Caco-2 (cell line): ENCODE measurements at regions of chr18 and their contacts with region 1.

Region 1: GRCh38 chr18:3186678-3187658 is 32.8 kb downstream of the MYOM1 start:
- DNase-seq: peak; percentile 57 to 64
- H3K4me3 ChIP-seq: no peak overlapping the region
- H3K4me3 Mint-ChIP-seq: no peak overlapping the region
- H3K27ac Mint-ChIP-seq: no peak overlapping the region
- H3K4me1 ChIP-seq: no peaks in the 10 kb centered on the region
- H3K4me1 Mint-ChIP-seq: peaks cover 12% of the 10 kb centered on the region
- H3K27me3 ChIP-seq: no peaks in the 10 kb centered on the region
- H3K27me3 Mint-ChIP-seq: no peaks in the 10 kb centered on the region
- CTCF ChIP-seq: peak; percentile 35 to 50

Region 2: DNA sequence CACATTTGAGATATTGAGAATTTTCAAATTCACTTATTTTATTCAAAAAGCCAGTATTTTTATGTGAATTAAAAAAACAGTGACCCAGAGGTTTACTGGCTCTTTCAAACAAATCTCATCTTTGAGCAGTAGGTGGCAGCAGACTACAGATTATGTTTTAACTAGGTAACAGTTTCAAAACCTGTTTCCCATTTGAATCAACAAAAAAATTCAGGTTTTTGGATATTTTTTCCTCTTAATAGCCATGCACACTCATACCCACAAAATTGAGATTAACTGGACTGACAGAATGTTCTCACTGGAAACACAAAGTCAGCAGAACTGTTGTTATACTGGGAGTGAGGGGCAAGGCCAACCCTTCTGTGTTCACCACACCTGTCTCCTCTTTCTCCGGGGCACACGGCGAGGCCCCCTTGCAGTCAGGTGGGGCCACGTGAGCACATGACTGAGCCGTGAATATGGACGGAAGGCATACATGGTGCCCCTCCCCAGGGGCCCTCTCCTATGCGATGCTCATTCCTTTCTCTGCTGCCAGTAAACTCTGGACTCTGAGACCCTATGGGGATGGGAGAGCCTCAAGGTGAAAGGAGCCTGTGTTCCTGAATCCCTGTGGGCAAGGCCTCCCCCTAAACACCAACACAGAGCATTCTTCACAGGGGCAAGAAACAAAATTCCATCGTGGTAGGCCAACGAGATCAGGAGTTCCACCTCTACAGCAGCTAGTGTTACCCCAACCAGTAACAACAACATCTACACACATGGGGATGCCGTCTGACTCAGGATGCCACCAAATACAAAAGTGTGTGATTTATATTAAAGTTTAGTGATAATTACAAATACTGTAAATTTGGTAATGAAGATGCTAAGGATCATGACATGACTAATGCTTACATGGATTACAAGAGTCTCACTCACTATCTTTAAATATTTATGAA is 254.5 kb before region 1 on chr18:
- CTCF ChIA-PET with region 1: no interaction called
- POLR2A ChIA-PET with region 1: no interaction called
- intact Hi-C with region 1: loop called (anchors 1 kb)
- DNase-seq: peak in 1 of 2 experiments; percentile 68
- H3K4me3 ChIP-seq: no peak overlapping the region
- H3K4me3 Mint-ChIP-seq: no peak overlapping the region
- H3K27ac Mint-ChIP-seq: no peak overlapping the region
- H3K4me1 ChIP-seq: no peaks in the 10 kb centered on the region
- H3K4me1 Mint-ChIP-seq: peaks cover 6% of the 10 kb centered on the region
- H3K27me3 ChIP-seq: no peaks in the 10 kb centered on the region
- H3K27me3 Mint-ChIP-seq: no peaks in the 10 kb centered on the region
- CTCF ChIP-seq: peak; percentile 73 to 75

Region 3: DNA sequence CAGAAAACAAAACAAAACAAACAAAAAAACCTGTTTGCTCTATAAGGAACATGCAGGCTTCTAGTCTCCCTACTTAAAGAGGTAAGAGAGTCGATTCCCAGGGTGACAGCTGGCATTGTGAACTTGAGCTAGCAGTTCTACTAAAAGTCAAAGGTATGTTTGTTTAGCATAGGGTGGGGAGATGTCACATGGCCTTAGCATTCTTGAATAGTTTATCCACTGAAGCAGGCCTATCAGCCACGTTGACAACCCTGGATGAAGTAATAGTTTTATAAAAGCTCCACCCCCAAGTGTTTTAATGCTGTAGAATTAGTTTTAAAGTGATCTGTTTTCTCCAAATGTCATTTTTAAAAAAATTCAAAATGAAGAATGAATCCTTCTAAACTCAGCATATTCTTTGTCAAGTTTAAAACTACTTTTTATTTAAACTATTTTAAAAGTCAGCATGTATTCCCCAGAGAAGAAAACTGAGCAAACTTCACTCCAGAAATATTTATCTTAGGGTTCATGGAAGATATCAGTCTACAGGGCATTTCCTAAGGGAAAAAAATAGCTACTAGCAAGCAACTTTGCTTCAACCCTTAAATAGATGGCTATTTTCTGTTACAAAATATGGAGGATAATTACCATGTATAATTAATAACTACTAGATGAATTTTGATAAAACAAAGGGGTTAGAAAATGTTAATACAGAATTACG is 31.1 kb after region 1 on chr18:
- CTCF ChIA-PET with region 1: interaction called, 3 read pairs
- POLR2A ChIA-PET with region 1: no interaction called
- intact Hi-C with region 1: loop called (anchors 1 kb)
- DNase-seq: peak; percentile 67
- H3K4me3 ChIP-seq: no peak overlapping the region
- H3K4me3 Mint-ChIP-seq: peak overlapping the region; percentile 22
- H3K27ac Mint-ChIP-seq: peak overlapping the region; percentile 37
- H3K4me1 ChIP-seq: peaks cover 29% of the 10 kb centered on the region
- H3K4me1 Mint-ChIP-seq: peaks cover 28% of the 10 kb centered on the region
- H3K27me3 ChIP-seq: no peaks in the 10 kb centered on the region
- H3K27me3 Mint-ChIP-seq: no peaks in the 10 kb centered on the region
- CTCF ChIP-seq: no peak

Region 4: DNA sequence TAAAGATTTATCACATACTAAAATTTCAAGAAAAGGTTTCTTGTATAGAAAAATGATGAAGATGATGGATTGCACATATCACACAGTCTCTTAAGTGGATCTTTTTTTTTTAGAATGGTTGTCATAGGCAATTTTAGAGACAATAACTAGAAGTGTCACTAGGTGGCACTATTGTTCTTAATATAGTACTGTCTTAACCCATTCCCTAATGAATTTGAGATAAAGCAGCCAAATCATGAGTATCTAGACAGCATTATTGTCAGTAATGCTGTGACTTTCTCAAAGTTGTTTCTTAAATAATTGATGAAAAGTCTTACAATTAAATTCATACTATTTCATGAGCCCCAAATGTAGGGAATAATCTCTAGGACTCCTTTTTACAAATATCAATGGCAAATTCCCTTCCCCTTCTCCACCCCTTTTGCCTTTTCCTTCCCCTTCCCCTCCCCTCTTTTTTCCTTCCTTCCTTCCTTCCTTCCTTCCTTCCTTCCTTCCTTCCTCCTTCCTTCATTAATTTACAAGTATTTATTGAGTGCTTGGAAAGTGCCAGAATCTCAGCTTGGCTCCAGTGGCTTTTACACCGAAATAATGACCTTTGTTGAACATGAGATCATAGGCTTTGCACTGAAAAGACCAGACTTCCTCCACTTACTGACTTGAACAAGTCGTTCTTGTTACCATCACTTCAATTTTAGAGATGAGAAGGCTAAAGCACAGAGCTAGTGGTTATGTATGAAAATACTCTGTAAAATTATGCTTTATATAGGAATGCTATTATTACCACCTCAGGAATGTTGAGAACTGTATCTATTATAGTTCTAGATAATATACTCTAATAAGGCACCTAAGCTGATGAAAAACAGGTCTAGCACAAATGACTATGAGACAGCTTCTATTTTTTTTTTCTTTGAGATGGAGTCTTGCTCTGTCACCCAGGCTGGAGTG is 94.8 kb after region 1 on chr18:
- CTCF ChIA-PET with region 1: no interaction called
- POLR2A ChIA-PET with region 1: no interaction called
- intact Hi-C with region 1: no loop called
- DNase-seq: peak in 1 of 2 experiments; percentile 78
- H3K4me3 ChIP-seq: no peak overlapping the region
- H3K4me3 Mint-ChIP-seq: no peak overlapping the region
- H3K27ac Mint-ChIP-seq: no peak overlapping the region
- H3K4me1 ChIP-seq: no peaks in the 10 kb centered on the region
- H3K4me1 Mint-ChIP-seq: peaks cover 13% of the 10 kb centered on the region
- H3K27me3 ChIP-seq: no peaks in the 10 kb centered on the region
- H3K27me3 Mint-ChIP-seq: no peaks in the 10 kb centered on the region
- CTCF ChIP-seq: peak; percentile 33 to 66

Region 5: DNA sequence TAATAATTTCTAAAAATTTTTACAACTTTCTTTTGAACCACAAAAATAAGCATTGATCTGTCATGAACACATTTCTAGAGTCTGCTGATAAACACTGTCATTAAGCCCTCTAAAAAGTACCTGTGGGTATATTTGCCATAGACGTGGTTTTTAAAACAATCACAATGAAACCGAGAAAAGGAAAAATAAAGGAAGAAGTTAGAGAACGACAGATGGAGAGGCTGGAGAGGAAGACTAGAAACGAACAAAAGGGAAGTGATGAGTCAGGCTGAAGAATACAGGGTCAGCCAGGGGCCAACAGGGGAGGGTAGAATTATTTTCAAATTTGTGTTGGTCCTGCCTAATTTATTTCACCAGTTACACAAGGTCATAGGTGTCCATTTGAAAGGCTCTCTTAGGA is 136.9 kb after region 1 on chr18:
- CTCF ChIA-PET with region 1: no interaction called
- POLR2A ChIA-PET with region 1: no interaction called
- intact Hi-C with region 1: no loop called
- DNase-seq: no peak
- H3K4me3 ChIP-seq: no peak overlapping the region
- H3K4me3 Mint-ChIP-seq: no peak overlapping the region
- H3K27ac Mint-ChIP-seq: no peak overlapping the region
- H3K4me1 ChIP-seq: peaks cover 6% of the 10 kb centered on the region
- H3K4me1 Mint-ChIP-seq: peaks cover 9% of the 10 kb centered on the region
- H3K27me3 ChIP-seq: no peaks in the 10 kb centered on the region
- H3K27me3 Mint-ChIP-seq: no peaks in the 10 kb centered on the region
- CTCF ChIP-seq: no peak

Region 6: GRCh38 chr18:3424280-3424890 is 237.4 kb after region 1 on chr18:
- CTCF ChIA-PET with region 1: no interaction called
- POLR2A ChIA-PET with region 1: no interaction called
- intact Hi-C with region 1: no loop called
- DNase-seq: peak in 1 of 2 experiments; percentile 42
- H3K4me3 ChIP-seq: no peak overlapping the region
- H3K4me3 Mint-ChIP-seq: no peak overlapping the region
- H3K27ac Mint-ChIP-seq: no peak overlapping the region
- H3K4me1 ChIP-seq: no peaks in the 10 kb centered on the region
- H3K4me1 Mint-ChIP-seq: no peaks in the 10 kb centered on the region
- H3K27me3 ChIP-seq: no peaks in the 10 kb centered on the region
- H3K27me3 Mint-ChIP-seq: no peaks in the 10 kb centered on the region
- CTCF ChIP-seq: no peak

Region 7: GRCh38 chr18:3472681-3473544 is 285.9 kb after region 1 on chr18:
- CTCF ChIA-PET with region 1: no interaction called
- POLR2A ChIA-PET with region 1: no interaction called
- intact Hi-C with region 1: no loop called
- DNase-seq: no peak
- H3K4me3 ChIP-seq: no peak overlapping the region
- H3K4me3 Mint-ChIP-seq: no peak overlapping the region
- H3K27ac Mint-ChIP-seq: no peak overlapping the region
- H3K4me1 ChIP-seq: peaks cover 12% of the 10 kb centered on the region
- H3K4me1 Mint-ChIP-seq: no peaks in the 10 kb centered on the region
- H3K27me3 ChIP-seq: no peaks in the 10 kb centered on the region
- H3K27me3 Mint-ChIP-seq: no peaks in the 10 kb centered on the region
- CTCF ChIP-seq: no peak